Mammary epithelial cell (primary cell): ENCODE measurements at regions of chr5 and their contacts with region 1.

Region 1: GRCh38 chr5:73902327-73903051 is 276.5 kb downstream of the ARHGEF28 start:
- DNase-seq: peak; percentile 48
- H3K4me3 ChIP-seq: no peak overlapping the region
- H3K27ac ChIP-seq: peak overlapping the region; percentile 96
- H3K4me1 ChIP-seq: peaks cover 33% of the 10 kb centered on the region
- H3K27me3 ChIP-seq: no peaks in the 10 kb centered on the region
- CTCF ChIP-seq: peak; percentile 58 to 76

Region 2: GRCh38 chr5:73812962-73813588 is 89.4 kb before region 1 on chr5:
- CTCF ChIA-PET with region 1: no interaction called
- dilution Hi-C with region 1: no loop called
- in situ Hi-C with region 1: no loop called
- intact Hi-C with region 1: no loop called
- DNase-seq: peak; percentile 77
- H3K4me3 ChIP-seq: peak overlapping the region; percentile 50 to 72 (median 54)
- H3K27ac ChIP-seq: peak overlapping the region; percentile 82
- H3K4me1 ChIP-seq: peaks cover 49% of the 10 kb centered on the region
- H3K27me3 ChIP-seq: no peaks in the 10 kb centered on the region
- CTCF ChIP-seq: no peak

Region 3: DNA sequence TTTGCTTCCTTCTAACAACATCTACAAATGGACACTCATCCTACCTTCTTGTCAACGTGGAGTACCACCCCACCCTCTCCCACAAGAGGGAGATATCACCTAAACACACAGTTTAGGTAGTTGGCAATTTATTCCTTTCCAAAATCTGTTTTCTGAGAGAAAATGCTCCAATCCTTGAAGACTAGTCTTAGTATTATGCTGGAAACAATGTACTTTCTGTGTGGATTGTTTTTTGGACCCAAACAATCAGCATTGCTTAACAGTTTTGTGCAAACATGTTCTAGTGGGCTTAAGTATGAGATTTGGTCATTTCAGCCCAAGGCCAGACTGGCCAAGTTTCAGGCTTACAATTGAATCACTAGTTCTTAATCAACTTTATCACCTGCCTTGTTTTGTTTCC is 82.7 kb after region 1 on chr5:
- CTCF ChIA-PET with region 1: no interaction called
- dilution Hi-C with region 1: no loop called
- in situ Hi-C with region 1: no loop called
- intact Hi-C with region 1: loop called (anchors 5 kb)
- DNase-seq: peak; percentile 83
- H3K4me3 ChIP-seq: no peak overlapping the region
- H3K27ac ChIP-seq: peak overlapping the region; percentile 38
- H3K4me1 ChIP-seq: peaks cover 30% of the 10 kb centered on the region
- H3K27me3 ChIP-seq: no peaks in the 10 kb centered on the region
- CTCF ChIP-seq: peak; percentile 54 to 56

Region 4: GRCh38 chr5:74035521-74035981 is 133.1 kb after region 1 on chr5:
- CTCF ChIA-PET with region 1: no interaction called
- dilution Hi-C with region 1: no loop called
- in situ Hi-C with region 1: no loop called
- intact Hi-C with region 1: loop called (anchors 2 kb)
- DNase-seq: peak; percentile 84
- H3K4me3 ChIP-seq: peak overlapping the region in 1 of 3 experiments; percentile 9
- H3K27ac ChIP-seq: peak overlapping the region; percentile 90
- H3K4me1 ChIP-seq: peaks cover 55% of the 10 kb centered on the region
- H3K27me3 ChIP-seq: no peaks in the 10 kb centered on the region
- CTCF ChIP-seq: peak; percentile 58 to 61

Region 5: DNA sequence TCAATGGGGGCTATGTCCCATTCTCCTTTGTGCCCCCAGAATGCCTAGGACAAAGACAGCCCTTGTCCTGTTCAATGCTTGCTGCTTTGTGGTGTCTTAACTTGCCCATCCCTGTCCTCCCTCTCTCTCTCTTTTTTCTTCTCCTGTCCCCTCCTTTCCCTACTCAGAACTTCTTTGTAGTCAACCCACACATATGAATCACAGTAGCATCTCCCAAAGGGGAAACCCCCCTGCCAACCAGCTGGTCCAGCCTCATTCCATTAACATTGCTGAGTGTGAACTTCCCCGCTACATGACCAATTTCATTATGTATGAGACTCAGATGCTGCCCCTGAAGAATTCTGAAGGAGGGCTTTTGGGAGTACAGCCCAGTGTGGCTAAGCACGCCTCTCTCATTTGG is 329.8 kb after region 1 on chr5:
- CTCF ChIA-PET with region 1: no interaction called
- dilution Hi-C with region 1: no loop called
- in situ Hi-C with region 1: no loop called
- intact Hi-C with region 1: loop called (anchors 10 kb)
- DNase-seq: peak; percentile 99
- H3K4me3 ChIP-seq: no peak overlapping the region
- H3K27ac ChIP-seq: peak overlapping the region; percentile 86
- H3K4me1 ChIP-seq: peaks cover 33% of the 10 kb centered on the region
- H3K27me3 ChIP-seq: no peaks in the 10 kb centered on the region
- CTCF ChIP-seq: no peak

Region 6: DNA sequence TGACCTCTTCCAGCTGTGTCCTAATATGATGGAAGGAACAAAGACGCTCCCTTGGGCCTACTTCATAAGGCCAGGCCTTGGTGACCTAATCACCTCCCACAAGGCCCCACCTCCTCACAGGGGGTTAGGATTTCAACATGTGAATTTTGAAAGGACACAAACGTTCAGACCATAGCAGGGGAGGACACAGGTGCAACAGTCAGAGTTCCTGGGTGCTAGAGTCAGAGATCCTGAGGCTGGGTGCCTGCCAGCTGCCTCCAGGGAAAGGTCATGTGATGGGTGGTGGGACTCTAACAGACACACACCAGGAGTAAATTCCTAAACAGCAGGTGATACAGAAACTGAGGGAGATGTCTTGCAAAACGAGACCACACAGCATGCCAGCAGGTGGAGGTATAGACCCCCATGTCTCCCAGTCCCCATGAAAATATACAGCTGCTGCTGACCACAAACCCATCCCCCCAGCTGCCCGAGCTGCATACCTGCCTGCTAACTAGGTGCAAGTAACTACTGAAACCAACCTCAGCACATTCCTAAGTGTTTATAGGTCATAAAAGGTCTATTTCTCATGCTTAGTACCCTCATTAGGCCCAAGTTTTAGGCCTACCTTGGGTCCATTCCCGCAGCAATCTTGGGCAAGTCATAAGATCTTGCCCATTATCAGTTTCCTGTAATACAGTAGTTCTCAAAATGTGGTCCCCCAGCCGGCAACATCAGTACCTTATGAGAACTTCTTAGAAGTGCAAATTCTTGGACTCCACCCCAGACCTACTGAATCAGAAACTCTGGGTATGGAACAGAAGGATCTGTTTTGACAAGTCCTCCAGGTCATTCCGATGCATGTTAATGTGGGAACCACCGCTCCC is 492.7 kb after region 1 on chr5:
- CTCF ChIA-PET with region 1: no interaction called
- dilution Hi-C with region 1: no loop called
- in situ Hi-C with region 1: no loop called
- intact Hi-C with region 1: loop called (anchors 2 kb)
- DNase-seq: peak; percentile 94
- H3K4me3 ChIP-seq: no peak overlapping the region
- H3K27ac ChIP-seq: peak overlapping the region; percentile 90
- H3K4me1 ChIP-seq: peaks cover 29% of the 10 kb centered on the region
- H3K27me3 ChIP-seq: no peaks in the 10 kb centered on the region
- CTCF ChIP-seq: peak; percentile 9 to 36

Region 7: DNA sequence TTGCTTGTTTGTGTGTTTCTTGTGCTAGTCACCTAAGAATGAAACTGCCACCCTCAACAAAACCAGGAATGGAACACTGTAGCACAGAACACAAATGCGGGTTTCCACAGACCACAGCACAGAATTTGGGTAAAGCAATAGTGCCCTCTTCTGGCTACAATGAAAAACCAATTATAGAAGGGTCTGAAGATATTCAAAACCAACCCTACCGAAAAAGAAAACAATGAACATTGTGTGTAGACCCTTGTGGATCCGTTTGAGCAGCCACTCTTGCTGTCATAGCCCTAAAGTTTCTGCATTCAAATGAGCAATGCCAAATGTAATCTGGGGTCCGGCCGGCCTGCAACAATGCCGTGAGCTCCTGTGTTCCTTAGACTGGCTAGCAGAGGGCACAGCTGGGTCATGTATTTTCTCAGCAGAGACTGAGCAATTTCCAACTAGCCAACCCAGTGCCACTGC is 746.4 kb after region 1 on chr5:
- CTCF ChIA-PET with region 1: no interaction called
- dilution Hi-C with region 1: loop called (anchors 10 kb)
- in situ Hi-C with region 1: loop called (anchors 5 kb)
- intact Hi-C with region 1: loop called (anchors 1 kb)
- DNase-seq: no peak
- H3K4me3 ChIP-seq: no peak overlapping the region
- H3K27ac ChIP-seq: no peak overlapping the region
- H3K4me1 ChIP-seq: peaks cover 55% of the 10 kb centered on the region
- H3K27me3 ChIP-seq: no peaks in the 10 kb centered on the region
- CTCF ChIP-seq: peak; percentile 65 to 66

Region 8: DNA sequence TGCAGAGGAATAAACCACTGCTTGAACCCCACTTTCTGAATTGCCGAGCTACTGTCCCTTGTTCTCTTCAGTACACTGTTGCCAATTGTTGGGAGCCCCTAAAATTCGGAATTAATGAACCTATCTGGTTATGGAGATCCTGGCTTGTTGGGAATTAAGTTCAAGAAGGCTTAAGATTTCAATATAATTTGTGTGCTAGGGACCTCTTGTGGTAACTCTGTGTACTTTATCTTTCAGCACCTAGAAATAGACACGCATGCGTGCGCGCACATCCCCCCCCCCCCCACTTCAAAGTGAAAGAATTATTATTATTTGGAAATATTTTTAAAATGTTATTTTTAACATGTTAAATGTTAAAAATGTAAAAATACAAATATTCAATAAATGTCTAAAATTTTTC is 1017.0 kb after region 1 on chr5:
- CTCF ChIA-PET with region 1: no interaction called
- dilution Hi-C with region 1: no loop called
- in situ Hi-C with region 1: loop called (anchors 25 kb)
- intact Hi-C with region 1: loop called (anchors 10 kb)
- DNase-seq: peak; percentile 45
- H3K4me3 ChIP-seq: no peak overlapping the region
- H3K27ac ChIP-seq: no peak overlapping the region
- H3K4me1 ChIP-seq: peaks cover 5% of the 10 kb centered on the region
- H3K27me3 ChIP-seq: no peaks in the 10 kb centered on the region
- CTCF ChIP-seq: peak; percentile 43 to 57